Naive thymus-derived CD8-positive, alpha-beta T cell (primary cell): ENCODE measurements at regions of chr14 and their contacts with region 1.

Region 1: GRCh38 chr14:102394717-102395375 is 32.1 kb downstream of the TECPR2 start:
- DNase-seq: peak in 7 of 10 donors; percentile 9 to 65 (median 30)
- ATAC-seq: peak; percentile 98
- H3K4me3 Mint-ChIP-seq: peak overlapping the region; percentile 62 to 86 (median 80)
- H3K27ac Mint-ChIP-seq: peak overlapping the region; percentile 79 to 97 (median 94)
- H3K4me1 Mint-ChIP-seq: peaks cover 9 to 24% (median 15%) of the 10 kb centered on the region in 4 donors
- H3K27me3 Mint-ChIP-seq: no peaks in the 10 kb centered on the region

Region 2: DNA sequence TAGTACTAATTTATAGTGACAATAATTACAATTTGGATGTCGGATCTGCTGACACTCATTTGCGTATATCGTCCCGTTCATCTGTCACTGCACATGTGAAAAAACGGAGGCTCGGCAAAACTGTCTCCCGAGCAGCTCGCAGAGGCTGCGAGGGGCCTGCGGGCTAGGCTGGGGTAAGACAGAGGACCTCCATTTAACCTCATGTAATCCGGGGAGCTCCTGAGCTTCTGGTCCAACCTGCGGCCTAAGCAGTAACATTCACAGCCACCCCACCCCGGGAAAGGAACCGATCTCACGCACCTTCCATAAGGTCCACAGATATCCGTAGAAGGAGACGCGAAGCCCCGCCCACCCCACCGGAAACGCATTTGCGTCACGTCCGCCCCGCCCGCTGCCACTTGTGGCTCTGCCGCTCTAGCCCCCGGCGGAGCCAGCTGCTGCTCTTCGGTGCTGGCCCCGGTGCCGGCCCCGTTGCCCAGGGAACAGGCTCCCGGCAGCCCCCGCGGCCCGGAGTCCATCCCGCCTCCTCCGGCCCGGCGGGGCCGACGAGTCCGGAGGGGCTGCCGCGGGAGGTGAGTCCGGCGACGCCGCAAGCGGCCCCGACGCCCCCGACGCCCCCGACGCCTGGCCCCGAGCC is 32.2 kb before region 1 on chr14 and contains the starts of genes CINP and TECPR2:
- POLR2A ChIA-PET with region 1: interaction called, 13 read pairs
- DNase-seq: peak; percentile 87 to 97 (median 93)
- ATAC-seq: peak; percentile 90
- H3K4me3 Mint-ChIP-seq: peak within 1 kb of the TSS in 8 of 10 donors; percentile 90 to 98 (median 95)
- H3K27ac Mint-ChIP-seq: peak within 1 kb of the TSS in 9 of 10 donors; percentile 90 to 99 (median 98)
- H3K4me1 Mint-ChIP-seq: peaks cover 19 to 36% (median 34%) of the 10 kb centered on the region in 4 donors
- H3K27me3 Mint-ChIP-seq: no peaks in the 10 kb centered on the region
- polyA plus RNA-seq, gene CINP: 40.2 to 46.6 (median 40.6) TPM
- polyA plus RNA-seq, gene TECPR2: 3.3 to 5.4 (median 4.3) TPM

Region 3: GRCh38 chr14:102408724-102409123 is 13.9 kb after region 1 on chr14:
- POLR2A ChIA-PET with region 1: no interaction called
- DNase-seq: no peak
- ATAC-seq: no peak
- H3K4me3 Mint-ChIP-seq: no peak overlapping the region
- H3K27ac Mint-ChIP-seq: peak overlapping the region in 4 of 10 donors; percentile 13 to 53 (median 41)
- H3K4me1 Mint-ChIP-seq: peaks cover 4 to 7% (median 5%) of the 10 kb centered on the region in 4 donors
- H3K27me3 Mint-ChIP-seq: no peaks in the 10 kb centered on the region

Region 4: GRCh38 chr14:102437997-102438915 is 43.4 kb after region 1 on chr14:
- POLR2A ChIA-PET with region 1: no interaction called
- DNase-seq: peak; percentile 42 to 69 (median 54)
- ATAC-seq: peak; percentile 59 to 79
- H3K4me3 Mint-ChIP-seq: peak overlapping the region in 2 of 10 donors; percentile 45 to 48
- H3K27ac Mint-ChIP-seq: no peak overlapping the region
- H3K4me1 Mint-ChIP-seq: peaks cover 0 to 7% (median 2%) of the 10 kb centered on the region in 4 donors
- H3K27me3 Mint-ChIP-seq: no peaks in the 10 kb centered on the region